ENCODE measurements at regions of chr1 and their contacts with region 1.

Region 1: DNA sequence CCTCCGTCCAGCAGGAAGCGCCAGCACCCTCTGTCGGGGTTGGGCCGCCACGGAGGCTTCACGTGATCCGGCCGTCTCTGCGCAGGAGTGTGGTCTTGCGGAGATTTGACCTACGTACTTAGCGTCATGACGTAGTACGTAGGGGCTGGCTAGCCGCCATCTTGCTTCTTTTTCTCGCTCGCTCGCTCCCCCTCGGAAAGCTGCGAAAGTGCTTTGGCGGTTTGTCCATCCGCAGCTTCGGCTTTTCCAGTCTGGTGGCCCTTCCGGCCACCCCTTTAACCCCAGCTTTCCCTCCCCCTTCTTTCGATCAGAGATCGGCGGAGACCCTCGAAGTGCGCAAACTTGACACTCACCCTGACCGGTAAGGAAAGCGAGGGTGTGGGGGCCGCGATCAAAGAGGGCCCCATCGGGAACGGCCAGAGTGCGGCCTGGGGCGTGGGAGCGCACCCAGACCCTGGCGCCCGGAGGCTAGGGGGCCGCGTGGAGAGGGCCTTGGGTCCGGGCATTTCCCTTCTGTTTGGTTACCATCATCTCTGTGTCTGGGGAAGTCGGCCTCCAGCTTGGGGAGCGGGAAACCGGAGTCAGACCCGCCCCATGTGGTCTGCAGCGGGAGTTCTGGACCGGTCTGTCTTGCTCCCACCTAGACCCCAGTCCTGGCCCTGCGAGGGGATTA is at the start of gene PRRC2C:
- DNase-seq: peak; percentile 100
- H3K4me3 Mint-ChIP-seq: peak within 1 kb of the TSS; percentile 80
- H3K27ac Mint-ChIP-seq: peak within 1 kb of the TSS; percentile 92
- H3K4me1 Mint-ChIP-seq: peaks cover 38% of the 10 kb centered on the region
- H3K27me3 Mint-ChIP-seq: no peaks in the 10 kb centered on the region
- CTCF ChIP-seq: peak; percentile 71
- total RNA-seq, gene PRRC2C: 296 and 298 TPM in 2 replicates

Region 2: DNA sequence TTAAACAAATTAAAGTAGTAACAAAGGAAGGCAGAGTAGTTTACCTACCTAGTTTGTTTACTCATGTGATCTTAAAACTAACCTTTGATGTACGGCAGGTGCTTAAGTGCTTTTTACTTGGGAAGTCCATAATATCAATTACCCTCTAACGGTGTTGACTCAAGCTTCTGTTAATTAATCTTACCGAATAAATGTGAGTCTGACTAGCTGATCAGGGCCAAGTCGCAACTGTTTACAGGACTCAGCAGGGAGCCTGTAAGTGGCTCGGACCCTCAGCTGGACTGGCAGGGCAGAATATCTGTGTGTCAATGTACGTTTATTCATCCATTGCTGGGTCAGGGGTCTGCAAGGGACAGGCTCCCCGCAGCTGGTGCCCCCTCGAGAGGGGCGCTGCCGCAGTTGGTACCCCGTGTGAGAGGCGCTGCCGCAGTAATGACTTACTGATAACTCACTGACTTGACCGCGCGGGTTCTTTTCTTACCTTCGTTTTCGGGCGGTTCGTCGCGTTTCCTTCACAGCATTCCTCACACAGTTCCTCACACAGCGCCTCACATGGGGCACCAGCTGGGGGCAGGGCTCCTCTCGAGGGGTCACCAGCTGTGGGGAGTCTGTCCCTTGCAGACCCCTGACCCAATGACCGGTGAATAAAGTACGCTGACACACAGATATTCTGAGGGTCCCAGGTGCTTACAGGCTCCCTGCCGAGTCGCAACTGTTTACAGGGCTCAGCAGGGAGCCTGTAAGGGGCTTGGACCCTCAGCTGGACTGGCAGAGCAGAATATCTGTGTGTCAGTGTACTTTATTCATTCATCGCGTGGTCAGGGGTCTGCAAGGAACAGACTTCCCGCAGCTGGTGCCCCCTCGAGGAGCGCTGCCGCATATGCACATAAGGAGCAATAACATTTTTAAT is 234.2 kb before region 1 on chr1:
- CTCF ChIA-PET with region 1: no interaction called
- POLR2A ChIA-PET with region 1: interaction called, 6 read pairs
- intact Hi-C with region 1: loop called (anchors 1 kb)
- DNase-seq: peak; percentile 68
- H3K4me3 Mint-ChIP-seq: peak overlapping the region; percentile 82
- H3K27ac Mint-ChIP-seq: peak overlapping the region; percentile 64
- H3K4me1 Mint-ChIP-seq: peaks cover 13% of the 10 kb centered on the region
- H3K27me3 Mint-ChIP-seq: no peaks in the 10 kb centered on the region
- CTCF ChIP-seq: peak; percentile 56

Region 3: DNA sequence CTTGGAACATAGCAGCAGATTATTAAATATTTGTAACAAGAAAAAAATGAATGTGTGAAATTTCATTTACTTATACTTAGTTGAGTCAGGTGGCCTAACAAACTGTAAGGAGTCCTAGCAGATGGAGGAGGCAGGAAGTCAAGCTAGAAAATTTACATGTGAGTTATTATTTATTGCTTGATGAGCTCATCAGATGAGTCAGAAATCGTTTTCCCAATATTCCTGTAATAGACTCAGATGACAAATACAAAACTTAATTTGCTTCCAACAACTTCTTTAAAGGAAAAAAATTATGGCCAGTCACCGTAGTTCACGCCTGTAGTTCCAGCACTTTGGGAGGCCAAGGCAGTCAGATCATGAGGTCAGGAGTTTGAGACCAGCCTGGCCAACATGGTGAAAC is 44.2 kb before region 1 on chr1:
- CTCF ChIA-PET with region 1: interaction called, 33 read pairs
- POLR2A ChIA-PET with region 1: interaction called, 38 read pairs
- intact Hi-C with region 1: loop called (anchors 1 kb)
- DNase-seq: peak; percentile 91
- H3K4me3 Mint-ChIP-seq: no peak overlapping the region
- H3K27ac Mint-ChIP-seq: peak overlapping the region; percentile 93
- H3K4me1 Mint-ChIP-seq: peaks cover 12% of the 10 kb centered on the region
- H3K27me3 Mint-ChIP-seq: no peaks in the 10 kb centered on the region
- CTCF ChIP-seq: no peak

Region 4: GRCh38 chr1:171468120-171469035 is 17.1 kb before region 1 on chr1:
- CTCF ChIA-PET with region 1: interaction called, 79 read pairs
- POLR2A ChIA-PET with region 1: interaction called, 23 read pairs
- intact Hi-C with region 1: no loop called
- DNase-seq: peak; percentile 74
- H3K4me3 Mint-ChIP-seq: no peak overlapping the region
- H3K27ac Mint-ChIP-seq: peak overlapping the region; percentile 74
- H3K4me1 Mint-ChIP-seq: no peaks in the 10 kb centered on the region
- H3K27me3 Mint-ChIP-seq: no peaks in the 10 kb centered on the region
- CTCF ChIP-seq: no peak

Region 5: DNA sequence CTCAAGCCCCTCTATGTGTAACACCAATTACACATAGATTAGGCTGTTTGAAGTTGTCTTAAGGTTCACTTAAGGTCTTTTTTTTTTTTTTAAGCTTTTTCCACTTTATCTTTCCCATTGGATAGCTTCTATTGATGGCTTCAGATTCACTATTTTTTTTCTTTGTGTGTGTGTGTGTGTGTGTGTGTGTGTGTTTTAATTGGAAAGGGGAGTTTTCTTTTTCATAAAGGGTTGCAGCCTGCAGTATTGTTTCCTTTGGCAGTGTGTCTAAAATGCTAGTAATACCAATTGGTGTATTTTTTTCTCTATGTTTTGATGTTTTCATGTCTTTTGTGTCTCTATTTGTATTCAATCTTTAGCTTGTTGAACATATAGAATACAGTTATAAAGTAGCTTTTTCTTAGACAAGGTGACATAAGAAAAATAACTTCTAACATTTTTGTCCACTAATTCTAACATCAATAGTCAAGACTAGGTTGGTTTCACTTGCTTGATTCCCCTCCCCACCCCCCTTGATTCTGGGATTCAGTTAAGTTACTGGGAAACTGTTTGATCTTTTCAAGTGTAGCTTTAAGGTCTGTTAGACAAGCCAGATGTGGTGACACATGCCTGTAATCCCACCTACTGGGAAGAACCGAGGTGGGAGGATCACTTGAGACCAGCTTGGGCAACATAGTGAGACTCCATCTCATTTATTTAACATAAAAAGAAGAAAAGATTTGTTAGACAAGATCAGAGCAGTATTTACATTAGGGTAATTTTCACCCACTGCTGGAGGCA is 21.2 kb after region 1 on chr1:
- CTCF ChIA-PET with region 1: interaction called, 73 read pairs
- POLR2A ChIA-PET with region 1: interaction called, 22 read pairs
- intact Hi-C with region 1: no loop called
- DNase-seq: peak; percentile 9
- H3K4me3 Mint-ChIP-seq: no peak overlapping the region
- H3K27ac Mint-ChIP-seq: peak overlapping the region; percentile 12
- H3K4me1 Mint-ChIP-seq: peaks cover 59% of the 10 kb centered on the region
- H3K27me3 Mint-ChIP-seq: no peaks in the 10 kb centered on the region
- CTCF ChIP-seq: no peak

Region 6: GRCh38 chr1:171595324-171595723 is 109.8 kb after region 1 on chr1:
- CTCF ChIA-PET with region 1: interaction called, 10 read pairs
- POLR2A ChIA-PET with region 1: no interaction called
- intact Hi-C with region 1: no loop called
- DNase-seq: no peak
- H3K4me3 Mint-ChIP-seq: no peak overlapping the region
- H3K27ac Mint-ChIP-seq: no peak overlapping the region
- H3K4me1 Mint-ChIP-seq: peaks cover 6% of the 10 kb centered on the region
- H3K27me3 Mint-ChIP-seq: no peaks in the 10 kb centered on the region
- CTCF ChIP-seq: no peak

Measured in MCF 10A (cell line).